IMR-90 (cell line): ENCODE measurements at regions of chr21 and their contacts with region 1.

Region 1: DNA sequence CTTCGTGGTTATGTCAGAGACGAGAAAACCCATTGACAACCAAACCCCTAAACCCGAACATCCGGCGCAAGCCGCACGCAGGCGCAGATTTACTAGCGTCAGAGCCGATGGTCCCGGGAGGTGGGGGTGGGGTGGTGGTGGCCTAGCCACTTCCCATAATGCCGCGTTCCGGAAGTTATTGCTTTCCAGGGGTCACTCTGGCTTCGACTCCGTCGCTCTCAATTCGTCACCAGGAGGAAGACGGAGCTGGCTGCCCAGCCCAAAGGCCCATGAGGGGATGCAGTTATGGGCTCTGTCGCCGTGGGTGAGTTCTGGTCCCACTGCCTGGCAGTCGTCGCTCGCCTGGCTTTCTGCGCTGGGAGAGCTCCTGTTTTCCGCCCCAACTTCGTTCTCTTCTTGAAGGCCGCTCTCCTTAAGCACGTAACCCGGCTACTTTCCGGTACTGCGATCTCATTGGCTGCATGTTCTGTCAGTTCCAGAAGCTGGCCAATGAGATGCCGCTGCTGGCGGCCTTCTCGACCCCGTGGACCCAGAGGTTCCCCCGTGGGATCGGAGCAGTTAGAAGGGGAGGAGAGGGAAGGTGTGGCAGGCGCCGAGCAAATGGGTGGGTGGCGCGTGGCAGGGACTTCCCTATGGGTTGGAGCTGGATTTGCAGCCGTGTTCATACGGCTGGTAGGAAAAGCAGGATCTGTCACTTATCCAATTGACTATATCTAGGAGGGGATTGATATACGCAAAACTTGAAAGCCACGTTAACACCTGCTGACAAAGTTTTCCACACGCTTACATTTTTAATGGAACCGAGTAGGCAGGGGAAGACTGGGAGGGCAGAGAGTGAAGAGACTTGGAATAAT is at the start of gene USP16:
- DNase-seq: peak; percentile 99
- ATAC-seq: peak; percentile 98
- H3K4me3 ChIP-seq: peak within 1 kb of the TSS; percentile 64
- H3K27ac ChIP-seq: peak within 1 kb of the TSS; percentile 83
- H3K4me1 ChIP-seq: no peaks in the 10 kb centered on the region; the same call in 1 of the 2 replicates
- H3K27me3 ChIP-seq: no peaks in the 10 kb centered on the region
- CTCF ChIP-seq: 0 out of 2 replicates have a peak, but pooled peaks have one; percentile 13
- POLR2A ChIP-seq: peak; percentile 93
- RAD21 ChIP-seq: peak; percentile 11; the same call in 1 of the 2 replicates
- total RNA-seq, gene USP16: 28.7 and 47.8 TPM in 2 replicates

Region 2: GRCh38 chr21:28959367-28960099 is 65.2 kb before region 1 on chr21:
- CTCF ChIA-PET with region 1: interaction called, 4 read pairs
- POLR2A ChIA-PET with region 1: no interaction called
- dilution Hi-C with region 1: no loop called
- in situ Hi-C with region 1: no loop called
- intact Hi-C with region 1: loop called (anchors 10 kb)
- DNase-seq: peak; percentile 89
- ATAC-seq: peak; percentile 94
- H3K4me3 ChIP-seq: no peak overlapping the region
- H3K27ac ChIP-seq: peak overlapping the region; percentile 70
- H3K4me1 ChIP-seq: peaks cover 2% of the 10 kb centered on the region; the same call in 1 of the 2 replicates
- H3K27me3 ChIP-seq: no peaks in the 10 kb centered on the region
- CTCF ChIP-seq: no peak
- POLR2A ChIP-seq: no peak
- RAD21 ChIP-seq: no peak